Astrocyte of the cerebellum (primary cell): ENCODE measurements at regions of chr3 and their contacts with region 1.

Region 1: GRCh38 chr3:134106580-134106979 is 76.9 kb upstream of the SLCO2A1 start:
- DNase-seq: no peak
- H3K4me3 ChIP-seq: no peak overlapping the region
- CTCF ChIP-seq: no peak

Region 2: DNA sequence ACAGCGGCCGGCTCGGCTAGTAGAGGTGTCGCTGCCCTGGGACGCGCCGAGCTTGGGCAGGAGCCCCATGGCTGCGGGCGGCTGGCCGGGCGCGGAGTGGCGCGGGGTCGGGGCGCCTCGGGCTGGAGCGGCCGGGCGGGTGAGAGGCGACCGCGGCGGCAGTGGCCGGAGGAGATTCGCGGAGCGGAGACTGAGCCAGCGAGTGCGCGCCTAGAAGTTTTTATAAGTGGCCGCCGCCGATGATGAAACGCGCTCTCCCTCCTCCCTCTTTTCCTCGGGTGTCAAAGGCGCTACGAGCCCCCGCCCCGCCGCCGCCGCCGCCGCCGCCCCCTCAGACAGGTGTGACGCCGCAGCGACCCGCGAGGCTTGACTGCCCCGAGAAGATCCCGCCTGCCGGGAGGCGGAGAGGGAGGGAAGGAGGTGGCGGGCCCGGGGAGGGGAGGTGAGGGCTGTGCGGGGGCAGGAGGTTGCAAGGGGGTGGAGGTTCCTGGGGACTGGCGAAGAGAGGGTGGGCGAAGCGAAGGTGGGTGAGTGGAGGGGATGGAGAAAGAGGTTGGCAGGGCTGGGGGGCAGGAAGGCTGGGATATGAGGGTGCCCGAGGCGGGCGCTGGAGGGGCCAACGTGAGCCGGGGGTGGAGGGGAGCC is 76.7 kb before region 1 on chr3 and contains the start of gene SLCO2A1:
- in situ Hi-C with region 1: loop called (anchors 5 kb)
- DNase-seq: no peak
- H3K4me3 ChIP-seq: peak within 1 kb of the TSS; percentile 65
- CTCF ChIP-seq: no peak

Region 3: GRCh38 chr3:134430950-134431445 is 324.4 kb after region 1 on chr3:
- in situ Hi-C with region 1: no loop called
- DNase-seq: no peak
- H3K4me3 ChIP-seq: no peak overlapping the region
- CTCF ChIP-seq: no peak